Gastrocnemius medialis (tissue), 4 donors: ENCODE measurements at regions of chr16 and their contacts with region 1.

Region 1: DNA sequence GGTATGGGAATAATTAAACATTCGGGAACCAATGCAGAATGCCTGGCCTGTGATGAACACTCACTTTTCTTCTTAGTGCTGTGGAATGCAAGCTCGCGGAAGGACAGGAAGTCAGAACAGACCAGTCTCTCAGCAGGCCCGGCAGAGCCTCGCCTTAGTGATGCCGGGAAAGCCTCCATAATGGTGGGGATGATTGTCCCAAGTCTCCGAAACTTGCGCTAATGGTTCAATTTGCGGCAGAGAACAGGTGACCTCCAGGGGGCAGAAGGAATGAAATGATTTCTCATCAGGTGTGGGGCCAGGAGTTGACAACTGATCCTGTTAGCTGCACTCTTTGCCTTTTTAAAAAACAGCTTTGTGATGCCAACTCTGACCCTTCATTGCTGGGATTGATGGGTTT is 170.6 kb downstream of the GSG1L start:
- DNase-seq: no peak
- ATAC-seq: no peak
- H3K4me3 ChIP-seq: no peak overlapping the region
- H3K27ac ChIP-seq: no peak overlapping the region
- H3K4me1 ChIP-seq: no peaks in the 10 kb centered on the region
- H3K27me3 ChIP-seq: peaks cover 3 to 6% (median 4%) of the 10 kb centered on the region in 3 donors
- CTCF ChIP-seq: no peak
- POLR2A ChIP-seq: no peak

Region 2: GRCh38 chr16:27795992-27796614 is 96.8 kb before region 1 on chr16:
- in situ Hi-C with region 1: loop called in 1 of 4 experiments (anchors 25 kb)
- intact Hi-C with region 1: no loop called
- DNase-seq: no peak
- ATAC-seq: no peak
- H3K4me3 ChIP-seq: no peak overlapping the region
- H3K27ac ChIP-seq: no peak overlapping the region
- H3K4me1 ChIP-seq: no peaks in the 10 kb centered on the region
- H3K27me3 ChIP-seq: no peaks in the 10 kb centered on the region
- CTCF ChIP-seq: no peak
- POLR2A ChIP-seq: no peak